ENCODE measurements at regions of chr20 and their contacts with region 1.

Region 1: GRCh38 chr20:63980806-63981728 is at the start of gene PRPF6:
- DNase-seq: peak; percentile 96
- ATAC-seq: peak; percentile 85 to 96 (median 93)
- H3K4me3 ChIP-seq: peak within 1 kb of the TSS; percentile 83 to 100 (median 94)
- H3K27ac ChIP-seq: peak within 1 kb of the TSS; percentile 36 to 92 (median 86)
- H3K4me1 ChIP-seq: peaks cover 21 to 52% (median 43%) of the 10 kb centered on the region in 9 donors
- H3K27me3 ChIP-seq: no peaks in the 10 kb centered on the region
- CTCF ChIP-seq: peak; percentile 45 to 98 (median 90)
- total RNA-seq, gene PRPF6: 43.8 to 53.6 (median 48.1) TPM

Region 2: GRCh38 chr20:63707549-63708300 is 273.3 kb before region 1 on chr20 and contains the starts of genes ARFRP1 and ZGPAT:
- intact Hi-C with region 1: no loop called
- DNase-seq: peak; percentile 91 to 93
- ATAC-seq: peak; percentile 93 to 98 (median 96)
- H3K4me3 ChIP-seq: peak within 1 kb of the TSS; percentile 77 to 99 (median 94)
- H3K27ac ChIP-seq: peak within 1 kb of the TSS; percentile 84 to 98 (median 94)
- H3K4me1 ChIP-seq: peaks cover 6 to 45% (median 32%) of the 10 kb centered on the region in 9 donors
- H3K27me3 ChIP-seq: no peaks in the 10 kb centered on the region
- CTCF ChIP-seq: peak in 1 of 9 donors; percentile 7
- total RNA-seq, gene ARFRP1: 34.9 to 51.6 (median 38.8) TPM
- total RNA-seq, gene ZGPAT: 11.8 to 21.7 (median 14.7) TPM

Region 3: DNA sequence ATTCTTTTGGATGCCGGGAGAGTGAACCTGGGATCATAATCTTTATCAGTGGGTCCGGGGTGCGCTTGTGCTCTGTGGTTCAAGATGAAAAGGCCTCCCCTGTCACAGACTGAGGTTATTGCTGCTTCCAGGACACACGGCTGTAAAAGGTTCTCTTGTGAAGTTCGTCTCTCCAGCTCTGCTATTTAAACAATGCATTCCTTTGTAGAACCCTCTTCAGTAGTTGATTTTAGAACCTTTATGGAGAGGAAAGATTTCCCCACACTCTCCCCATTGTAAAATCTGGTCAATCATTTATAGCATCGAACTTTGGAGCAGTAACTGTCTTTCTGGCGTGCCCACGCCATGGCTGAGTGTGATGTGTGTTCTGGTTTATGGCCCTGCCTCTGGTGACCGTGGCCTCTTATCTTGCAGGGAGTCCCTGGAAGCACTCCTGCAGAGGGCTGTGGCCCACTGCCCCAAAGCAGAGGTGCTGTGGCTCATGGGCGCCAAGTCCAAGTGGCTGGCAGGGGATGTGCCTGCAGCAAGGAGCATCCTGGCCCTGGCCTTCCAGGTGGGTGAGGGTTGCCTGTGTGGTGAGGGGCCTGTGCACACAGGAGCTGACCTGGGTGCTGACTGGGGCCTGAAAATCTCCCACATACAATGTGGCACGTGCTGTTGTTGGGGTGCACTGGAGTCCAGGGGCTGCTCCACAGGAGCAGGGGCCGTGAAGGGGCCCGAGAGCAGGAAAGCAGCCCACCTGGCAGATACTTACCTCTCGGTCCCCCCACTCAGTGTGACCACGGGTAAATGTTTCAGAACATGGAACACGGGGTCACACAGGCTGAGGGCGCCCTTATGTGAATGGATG is 43.3 kb after region 1 on chr20:
- intact Hi-C with region 1: loop called in 1 of 10 experiments (anchors 5 kb)
- DNase-seq: no peak
- ATAC-seq: no peak
- H3K4me3 ChIP-seq: no peak overlapping the region
- H3K27ac ChIP-seq: no peak overlapping the region
- H3K4me1 ChIP-seq: no peaks in the 10 kb centered on the region
- H3K27me3 ChIP-seq: no peaks in the 10 kb centered on the region
- CTCF ChIP-seq: no peak

Region 4: DNA sequence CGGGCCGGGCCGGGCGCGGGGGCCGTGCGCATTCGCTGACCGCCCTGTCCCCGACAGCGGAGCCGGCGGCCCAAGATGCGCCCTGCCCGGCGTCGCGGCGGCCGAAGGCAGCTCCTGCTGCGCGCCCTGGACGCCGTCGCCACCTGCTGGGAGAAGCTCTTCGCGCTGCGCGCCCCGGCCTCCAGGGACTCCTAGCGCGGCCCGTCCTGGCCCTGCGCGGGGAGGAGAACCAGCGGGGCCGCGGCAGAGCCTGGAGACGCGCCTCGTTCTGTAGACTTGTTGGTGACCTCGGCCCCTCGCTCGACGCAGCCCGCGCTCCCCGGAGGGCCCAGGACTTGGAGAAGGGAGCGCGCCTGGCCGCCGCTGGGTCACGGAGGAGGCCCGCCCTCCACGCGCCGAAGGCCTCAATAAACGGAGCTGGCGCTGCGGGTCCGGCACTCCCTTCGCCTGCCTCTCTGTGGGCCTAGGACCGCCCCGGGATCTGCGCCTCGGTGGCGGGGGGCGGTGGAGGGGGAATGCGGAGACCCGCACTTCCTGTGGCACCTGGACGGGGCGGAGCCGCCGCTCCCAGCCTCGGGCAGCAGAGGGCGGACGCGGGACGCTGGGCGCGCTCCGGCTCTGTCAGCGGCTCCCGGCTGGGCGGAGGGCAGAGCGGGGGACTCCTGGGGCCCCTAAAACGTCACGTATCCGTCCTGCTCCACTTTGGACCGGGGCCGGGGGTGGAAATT is 57.7 kb after region 1 on chr20:
- intact Hi-C with region 1: loop called in 4 of 10 experiments (anchors 5 to 10 kb)
- DNase-seq: peak; percentile 83 to 92
- ATAC-seq: peak; percentile 82 to 91 (median 87)
- H3K4me3 ChIP-seq: peak overlapping the region; percentile 26 to 66 (median 57)
- H3K27ac ChIP-seq: peak overlapping the region; percentile 55 to 96 (median 84)
- H3K4me1 ChIP-seq: peaks cover 17 to 68% (median 56%) of the 10 kb centered on the region in 9 donors
- H3K27me3 ChIP-seq: peaks cover 3 to 77% (median 58%) of the 10 kb centered on the region in 7 donors
- CTCF ChIP-seq: peak; percentile 46 to 84 (median 76)

Region 5: GRCh38 chr20:64062596-64063388 is 81.7 kb after region 1 on chr20 and contains the start of gene TCEA2:
- intact Hi-C with region 1: loop called in 5 of 10 experiments (anchors 2 to 5 kb)
- DNase-seq: peak; percentile 97 to 98
- ATAC-seq: peak; percentile 91 to 97 (median 96)
- H3K4me3 ChIP-seq: peak within 1 kb of the TSS; percentile 77 to 100 (median 93)
- H3K27ac ChIP-seq: peak within 1 kb of the TSS; percentile 44 to 92 (median 88)
- H3K4me1 ChIP-seq: peaks cover 5 to 51% (median 30%) of the 10 kb centered on the region in 9 donors
- H3K27me3 ChIP-seq: peaks cover 0 to under 1% (median 0%) of the 10 kb centered on the region in 7 donors
- CTCF ChIP-seq: no peak
- total RNA-seq, gene TCEA2: 40.8 to 51.0 (median 44.9) TPM

Region 6: GRCh38 chr20:64069614-64070243 is 88.7 kb after region 1 on chr20:
- intact Hi-C with region 1: loop called in 1 of 10 experiments (anchors 5 kb)
- DNase-seq: no peak
- ATAC-seq: peak in 3 of 8 donors; percentile 5 to 23 (median 17)
- H3K4me3 ChIP-seq: no peak overlapping the region
- H3K27ac ChIP-seq: no peak overlapping the region
- H3K4me1 ChIP-seq: peaks cover 0 to 24% (median 6%) of the 10 kb centered on the region in 9 donors
- H3K27me3 ChIP-seq: no peaks in the 10 kb centered on the region
- CTCF ChIP-seq: peak; percentile 36 to 80 (median 67)

Region 7: GRCh38 chr20:64119681-64120341 is 138.7 kb after region 1 on chr20:
- intact Hi-C with region 1: loop called in 1 of 10 experiments (anchors 5 kb)
- DNase-seq: no peak
- ATAC-seq: peak in 5 of 8 donors; percentile 10 to 46 (median 27)
- H3K4me3 ChIP-seq: peak overlapping the region in 4 of 10 donors; percentile 22 to 36 (median 29)
- H3K27ac ChIP-seq: no peak overlapping the region
- H3K4me1 ChIP-seq: peaks cover 0 to 10% (median 0%) of the 10 kb centered on the region in 9 donors
- H3K27me3 ChIP-seq: peaks cover 0 to 32% (median 25%) of the 10 kb centered on the region in 7 donors
- CTCF ChIP-seq: no peak

Measured in heart right ventricle (tissue), 16 donors.